Activated CD8-positive, alpha-beta T cell treated with anti-CD3 and anti-CD28 coated beads, Interleukin-2, amount 10 ng/mL, durations not matched to agents 7 days and 5 days (primary cell): ENCODE measurements at regions of chr20 and their contacts with region 1.

Region 1: GRCh38 chr20:24033151-24033550 is 44.6 kb upstream of the GGTLC1 start:
- DNase-seq: peak; percentile 70
- ATAC-seq: peak; percentile 82
- H3K4me3 Mint-ChIP-seq: peak overlapping the region; percentile 24
- H3K27ac Mint-ChIP-seq: peak overlapping the region; percentile 79
- H3K4me1 Mint-ChIP-seq: peaks cover 64% of the 10 kb centered on the region
- H3K27me3 Mint-ChIP-seq: no peaks in the 10 kb centered on the region

Region 2: DNA sequence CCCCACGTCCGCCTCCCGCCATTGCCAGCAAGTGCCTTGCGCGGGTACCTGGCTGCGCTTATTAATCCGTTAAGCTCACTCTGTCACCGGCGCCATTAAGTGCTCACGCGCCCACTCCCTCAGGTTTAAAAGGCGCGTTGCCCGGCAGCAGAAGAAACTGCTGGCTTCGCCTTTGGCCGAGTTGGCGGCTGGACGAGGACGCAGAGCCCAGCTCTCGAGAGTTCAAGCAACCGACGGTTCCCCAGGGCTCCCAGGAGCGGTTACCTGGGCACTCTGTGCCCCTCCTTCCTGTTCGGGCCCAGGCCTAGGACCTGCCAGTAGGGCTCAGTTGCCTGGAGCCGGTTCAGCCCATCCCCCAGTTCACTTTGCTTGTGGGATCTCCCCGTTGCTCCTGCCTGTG is 44.6 kb before region 1 on chr20 and contains the start of gene GGTLC1:
- CTCF ChIA-PET with region 1: no interaction called
- POLR2A ChIA-PET with region 1: no interaction called
- DNase-seq: no peak
- ATAC-seq: no peak
- H3K4me3 Mint-ChIP-seq: no peak within 1 kb of the TSS
- H3K27ac Mint-ChIP-seq: no peak within 1 kb of the TSS
- H3K4me1 Mint-ChIP-seq: no peaks in the 10 kb centered on the region
- H3K27me3 Mint-ChIP-seq: no peaks in the 10 kb centered on the region
- total RNA-seq, gene GGTLC1: not detected

Region 3: DNA sequence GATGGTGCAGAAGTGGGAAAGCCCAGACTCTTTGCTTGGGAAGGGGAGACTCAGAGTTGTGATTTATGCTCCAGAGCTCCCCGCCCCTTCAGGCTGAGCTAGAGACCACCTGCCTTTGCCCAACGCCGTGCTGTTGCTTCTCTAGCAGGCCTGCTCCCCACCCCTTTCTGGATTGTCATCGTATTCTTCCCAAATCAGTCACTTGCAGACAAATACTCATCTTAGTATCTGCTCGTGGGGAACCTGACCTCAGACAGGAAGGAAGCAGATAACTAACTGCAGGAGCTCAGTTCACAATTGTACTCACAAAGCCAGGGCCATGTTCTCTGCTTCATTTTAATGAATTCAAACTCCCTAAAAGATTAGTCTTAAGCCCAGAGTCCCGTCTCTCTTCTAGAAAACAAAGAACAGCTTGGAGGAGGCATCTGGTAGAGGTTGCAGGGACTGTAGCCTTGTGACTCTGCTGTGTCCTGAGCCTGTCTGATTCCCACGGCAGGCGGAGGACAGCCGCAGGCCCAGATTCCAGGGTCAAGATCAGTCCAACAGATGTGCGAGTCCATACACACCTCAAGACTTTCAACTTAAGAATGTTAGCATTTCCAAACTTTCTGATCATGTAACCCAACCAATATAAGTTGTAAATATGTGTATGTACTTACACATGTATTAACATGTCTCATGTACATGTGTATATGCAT is 12.6 kb after region 1 on chr20:
- CTCF ChIA-PET with region 1: interaction called, 14 read pairs
- POLR2A ChIA-PET with region 1: interaction called, 3 read pairs
- DNase-seq: peak; percentile 63
- ATAC-seq: peak; percentile 83
- H3K4me3 Mint-ChIP-seq: peak overlapping the region; percentile 36
- H3K27ac Mint-ChIP-seq: peak overlapping the region; percentile 80
- H3K4me1 Mint-ChIP-seq: peaks cover 49% of the 10 kb centered on the region
- H3K27me3 Mint-ChIP-seq: no peaks in the 10 kb centered on the region

Region 4: GRCh38 chr20:24328901-24329300 is 295.8 kb after region 1 on chr20:
- CTCF ChIA-PET with region 1: no interaction called
- POLR2A ChIA-PET with region 1: no interaction called
- DNase-seq: no peak
- ATAC-seq: no peak
- H3K4me3 Mint-ChIP-seq: no peak overlapping the region
- H3K27ac Mint-ChIP-seq: no peak overlapping the region
- H3K4me1 Mint-ChIP-seq: peaks cover 23% of the 10 kb centered on the region
- H3K27me3 Mint-ChIP-seq: peaks cover under 1% of the 10 kb centered on the region